Activated CD8-positive, alpha-beta T cell treated with anti-CD3 and anti-CD28 coated beads for 36 hours (primary cell): ENCODE measurements at regions of chr3 and their contacts with region 1.

Region 1: GRCh38 chr3:49093853-49094767 is at the start of gene QRICH1:
- DNase-seq: peak; percentile 98
- ATAC-seq: peak; percentile 86
- H3K4me3 Mint-ChIP-seq: peak within 1 kb of the TSS; percentile 88
- H3K27ac Mint-ChIP-seq: peak within 1 kb of the TSS; percentile 96
- H3K4me1 Mint-ChIP-seq: peaks cover 28% of the 10 kb centered on the region
- H3K27me3 Mint-ChIP-seq: no peaks in the 10 kb centered on the region
- CTCF ChIP-seq: peak; percentile 63
- total RNA-seq, gene QRICH1: 107 to 112 TPM

Region 2: GRCh38 chr3:48989796-48990635 is 104.1 kb before region 1 on chr3 and contains the start of gene P4HTM:
- CTCF ChIA-PET with region 1: interaction called, 29 read pairs
- POLR2A ChIA-PET with region 1: interaction called, 14 read pairs
- intact Hi-C with region 1: no loop called
- DNase-seq: peak; percentile 92
- ATAC-seq: peak; percentile 84
- H3K4me3 Mint-ChIP-seq: peak within 1 kb of the TSS; percentile 92
- H3K27ac Mint-ChIP-seq: peak within 1 kb of the TSS; percentile 95
- H3K4me1 Mint-ChIP-seq: peaks cover 41% of the 10 kb centered on the region
- H3K27me3 Mint-ChIP-seq: no peaks in the 10 kb centered on the region
- CTCF ChIP-seq: peak; percentile 11
- total RNA-seq, gene P4HTM: 24.8 to 25.0 TPM

Region 3: DNA sequence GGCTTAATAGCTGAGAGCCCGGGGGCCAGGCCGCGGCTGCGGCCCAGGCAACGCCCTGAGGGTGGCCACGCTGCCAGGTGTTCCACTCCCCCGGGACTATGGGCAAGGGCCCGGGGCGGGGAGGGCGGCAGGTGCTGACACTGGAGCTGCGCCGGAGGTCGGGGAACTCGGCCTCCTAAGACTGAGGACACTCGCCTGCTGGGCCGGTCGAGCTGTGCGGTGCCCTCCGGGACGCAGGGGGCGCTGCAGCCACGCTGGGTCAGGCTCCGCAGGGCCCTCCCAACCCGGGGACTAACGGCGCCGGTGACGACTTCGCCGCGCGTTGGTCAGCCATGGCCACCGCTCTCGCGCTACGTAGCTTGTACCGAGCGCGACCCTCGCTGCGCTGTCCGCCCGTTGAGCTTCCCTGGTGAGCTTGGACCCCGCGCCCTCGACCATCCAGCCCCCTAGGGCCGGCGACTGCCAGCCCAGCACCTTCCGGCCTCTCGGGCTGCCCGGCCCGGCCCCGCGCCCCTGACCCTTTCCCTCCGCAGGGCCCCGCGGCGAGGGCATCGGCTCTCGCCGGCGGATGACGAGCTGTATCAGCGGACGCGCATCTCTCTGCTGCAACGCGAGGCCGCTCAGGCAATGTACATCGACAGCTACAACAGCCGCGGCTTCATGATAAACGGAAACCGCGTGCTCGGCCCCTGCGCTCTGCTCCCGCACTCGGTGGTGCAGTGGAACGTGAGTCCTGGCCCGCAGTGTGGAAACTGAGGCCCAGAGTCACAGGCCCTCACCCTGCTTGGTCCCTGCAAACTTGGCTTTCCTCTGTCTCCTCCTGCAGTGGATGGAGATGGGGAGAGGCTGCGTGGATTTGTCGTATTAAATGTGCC is 72.1 kb before region 1 on chr3 and contains the start of gene NDUFAF3:
- CTCF ChIA-PET with region 1: interaction called, 37 read pairs
- POLR2A ChIA-PET with region 1: interaction called, 23 read pairs
- intact Hi-C with region 1: loop called (anchors 5 kb)
- DNase-seq: peak; percentile 95
- ATAC-seq: peak; percentile 74
- H3K4me3 Mint-ChIP-seq: peak within 1 kb of the TSS; percentile 87
- H3K27ac Mint-ChIP-seq: peak within 1 kb of the TSS; percentile 94
- H3K4me1 Mint-ChIP-seq: peaks cover 48% of the 10 kb centered on the region
- H3K27me3 Mint-ChIP-seq: no peaks in the 10 kb centered on the region
- CTCF ChIP-seq: peak; percentile 99
- total RNA-seq, gene NDUFAF3: 90.7 to 95.5 TPM

Region 4: GRCh38 chr3:49081429-49081828 is 12.7 kb before region 1 on chr3:
- CTCF ChIA-PET with region 1: interaction called, 11 read pairs
- POLR2A ChIA-PET with region 1: interaction called, 42 read pairs
- intact Hi-C with region 1: no loop called
- DNase-seq: no peak
- ATAC-seq: no peak
- H3K4me3 Mint-ChIP-seq: no peak overlapping the region
- H3K27ac Mint-ChIP-seq: no peak overlapping the region
- H3K4me1 Mint-ChIP-seq: peaks cover 20% of the 10 kb centered on the region
- H3K27me3 Mint-ChIP-seq: no peaks in the 10 kb centered on the region
- CTCF ChIP-seq: no peak

Region 5: GRCh38 chr3:49112262-49112661 is 18.2 kb after region 1 on chr3:
- CTCF ChIA-PET with region 1: interaction called, 8 read pairs
- POLR2A ChIA-PET with region 1: interaction called, 24 read pairs
- intact Hi-C with region 1: no loop called
- DNase-seq: no peak
- ATAC-seq: no peak
- H3K4me3 Mint-ChIP-seq: no peak overlapping the region
- H3K27ac Mint-ChIP-seq: no peak overlapping the region
- H3K4me1 Mint-ChIP-seq: no peaks in the 10 kb centered on the region
- H3K27me3 Mint-ChIP-seq: no peaks in the 10 kb centered on the region
- CTCF ChIP-seq: no peak

Region 6: DNA sequence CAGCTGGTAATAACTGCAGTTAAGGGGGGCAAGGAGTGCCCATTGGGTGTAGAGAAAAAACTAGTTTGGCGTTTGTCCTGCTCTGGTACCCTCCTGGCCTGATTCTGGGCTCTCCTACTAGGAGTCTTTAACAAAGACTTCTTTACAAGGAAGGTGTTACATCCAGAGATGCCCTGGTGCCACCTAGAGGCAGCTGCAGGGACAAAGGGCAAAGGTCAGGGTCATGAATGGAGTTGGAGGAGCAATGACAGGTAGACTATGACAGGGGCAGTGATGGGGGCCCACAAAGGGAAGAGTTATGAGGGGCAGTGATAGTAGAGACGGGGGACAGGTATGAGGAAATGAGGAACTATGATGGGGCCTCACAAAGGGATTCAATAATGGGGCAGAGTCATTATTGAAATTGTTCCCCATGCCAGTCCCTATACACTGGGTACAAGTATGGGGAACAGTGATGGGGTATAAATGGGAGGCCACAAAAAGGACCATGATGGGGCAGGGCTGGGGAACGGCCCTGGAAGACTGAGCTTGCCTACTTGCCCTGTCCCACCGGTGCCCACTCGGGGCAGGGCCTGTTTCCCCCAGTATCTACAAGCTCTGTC is 64.1 kb after region 1 on chr3:
- CTCF ChIA-PET with region 1: interaction called, 5 read pairs
- POLR2A ChIA-PET with region 1: interaction called, 14 read pairs
- intact Hi-C with region 1: loop called (anchors 2 kb)
- DNase-seq: peak; percentile 84
- ATAC-seq: peak; percentile 90
- H3K4me3 Mint-ChIP-seq: no peak overlapping the region
- H3K27ac Mint-ChIP-seq: peak overlapping the region; percentile 14
- H3K4me1 Mint-ChIP-seq: peaks cover 19% of the 10 kb centered on the region
- H3K27me3 Mint-ChIP-seq: no peaks in the 10 kb centered on the region
- CTCF ChIP-seq: peak; percentile 58